ENCODE measurements at regions of chr7 and their contacts with region 1.

Region 1: GRCh38 chr7:74097937-74098614 is 14.5 kb downstream of the LIMK1 start:
- DNase-seq: peak; percentile 77
- H3K4me3 ChIP-seq: no peak overlapping the region
- H3K27ac ChIP-seq: peak overlapping the region; percentile 95
- H3K27me3 ChIP-seq: no peaks in the 10 kb centered on the region
- CTCF ChIP-seq: no peak

Region 2: DNA sequence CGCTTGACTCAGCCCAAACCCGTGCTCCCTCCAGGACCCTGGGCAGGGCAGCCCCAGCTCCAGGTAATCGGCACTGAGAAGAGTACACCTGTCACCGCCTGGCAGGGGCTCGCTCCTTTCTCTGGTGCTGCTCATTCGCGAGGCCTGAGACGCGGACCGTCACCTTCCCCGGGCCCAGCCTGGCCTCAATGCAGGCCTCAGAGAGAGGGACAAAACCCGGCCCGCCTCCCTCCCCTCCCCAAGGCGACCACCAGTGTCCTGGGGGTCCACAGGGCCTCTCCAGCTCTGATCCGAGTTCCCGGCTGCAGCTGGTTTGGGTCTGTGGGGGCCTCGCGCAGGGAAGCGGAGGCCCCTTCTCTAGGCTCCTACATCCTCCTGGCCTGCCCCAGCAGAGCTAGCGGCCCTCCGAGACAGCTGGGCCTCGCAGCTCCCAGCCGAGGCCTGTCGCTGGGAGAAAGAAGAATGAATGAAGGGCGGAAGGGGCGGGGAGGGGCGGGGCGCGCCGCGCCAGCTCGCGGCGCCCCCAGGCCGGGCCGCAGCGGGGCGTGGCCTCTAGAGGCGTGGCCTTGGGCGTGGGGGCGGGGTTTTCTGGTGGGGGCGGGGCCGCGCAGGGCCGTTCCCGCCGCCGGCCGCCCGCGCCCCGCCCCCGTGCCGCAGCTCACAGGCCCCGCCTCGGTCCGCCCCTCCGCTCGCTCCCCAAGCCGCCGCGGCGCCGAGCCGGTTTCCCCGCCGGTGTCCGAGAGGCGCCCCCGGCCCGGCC is 14.8 kb before region 1 on chr7 and contains the start of gene LIMK1:
- CTCF ChIA-PET with region 1: interaction called, 3 read pairs
- POLR2A ChIA-PET with region 1: interaction called, 10 read pairs
- DNase-seq: peak; percentile 42
- H3K4me3 ChIP-seq: peak within 1 kb of the TSS; percentile 69
- H3K27ac ChIP-seq: peak within 1 kb of the TSS; percentile 73
- H3K27me3 ChIP-seq: no peaks in the 10 kb centered on the region
- CTCF ChIP-seq: no peak
- polyA plus RNA-seq, gene LIMK1: 33.0 and 52.8 TPM in 2 replicates

Measured in AG04450 (cell line).